CD4-positive, alpha-beta memory T cell (primary cell): ENCODE measurements at regions of chr17 and their contacts with region 1.

Region 1: GRCh38 chr17:58136669-58137283 is 11.4 kb upstream of the OR4D1 start:
- DNase-seq: no peak
- H3K4me3 ChIP-seq: no peak overlapping the region
- H3K4me3 Mint-ChIP-seq: no peak overlapping the region
- H3K27ac ChIP-seq: no peak overlapping the region
- H3K27ac Mint-ChIP-seq: no peak overlapping the region
- H3K4me1 ChIP-seq: no peaks in the 10 kb centered on the region
- H3K4me1 Mint-ChIP-seq: peaks cover 0 to 6% (median 1%) of the 10 kb centered on the region in 4 donors
- H3K27me3 ChIP-seq: no peaks in the 10 kb centered on the region
- H3K27me3 Mint-ChIP-seq: peaks cover 2 to 3% of the 10 kb centered on the region in 2 donors

Region 2: DNA sequence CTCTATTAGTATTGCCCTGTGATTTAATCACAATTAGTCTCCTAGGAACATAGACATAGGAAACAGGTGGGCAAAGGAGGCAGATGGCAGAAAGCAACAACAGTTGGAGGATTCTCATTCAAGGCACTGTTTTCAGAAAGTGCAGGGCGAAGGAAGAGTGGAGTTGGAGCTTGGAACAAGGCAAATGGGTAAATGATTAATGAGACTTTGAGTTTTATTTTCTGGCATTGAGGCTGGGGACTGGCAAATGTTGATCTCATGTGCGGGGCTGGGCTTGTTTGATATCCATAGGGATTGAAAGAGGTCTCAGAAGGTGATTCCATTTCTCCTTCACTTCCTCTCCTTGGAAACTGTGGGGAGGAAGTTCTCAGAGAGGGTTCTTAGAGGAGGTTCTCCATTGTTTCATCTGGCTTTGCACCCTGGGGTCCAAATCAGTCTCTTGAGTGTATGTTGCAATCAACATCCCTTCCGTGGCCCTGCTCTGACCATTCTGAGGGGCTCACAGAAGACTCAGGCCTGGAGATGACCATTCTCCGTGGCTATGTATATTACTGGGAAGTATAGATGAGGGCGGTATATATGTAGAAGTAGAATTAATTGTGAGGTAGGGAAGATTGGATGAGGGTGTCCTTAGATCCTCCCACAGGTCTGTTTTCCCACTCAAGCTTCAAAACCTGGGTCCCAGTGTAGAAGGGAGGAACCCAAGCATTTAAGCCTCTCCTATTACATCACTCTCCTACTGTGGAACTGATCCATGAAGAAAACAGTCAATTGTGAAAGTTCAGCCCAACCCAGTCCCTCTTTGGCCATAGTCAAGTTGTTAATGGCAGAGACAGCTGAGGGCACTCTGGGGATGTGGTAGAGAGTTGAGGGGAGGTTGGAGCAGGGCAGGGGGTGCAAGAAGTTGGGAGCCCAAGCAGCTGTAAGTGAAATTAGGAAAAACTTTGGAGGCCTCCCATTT is 93.3 kb before region 1 on chr17:
- CTCF ChIA-PET with region 1: no interaction called
- POLR2A ChIA-PET with region 1: no interaction called
- intact Hi-C with region 1: no loop called
- DNase-seq: no peak
- H3K4me3 ChIP-seq: no peak overlapping the region
- H3K4me3 Mint-ChIP-seq: no peak overlapping the region
- H3K27ac ChIP-seq: no peak overlapping the region
- H3K27ac Mint-ChIP-seq: peak overlapping the region in 1 of 7 donors; percentile 16
- H3K4me1 ChIP-seq: no peaks in the 10 kb centered on the region
- H3K4me1 Mint-ChIP-seq: no peaks in the 10 kb centered on the region
- H3K27me3 ChIP-seq: no peaks in the 10 kb centered on the region
- H3K27me3 Mint-ChIP-seq: peaks cover 13 to 33% of the 10 kb centered on the region in 2 donors

Region 3: DNA sequence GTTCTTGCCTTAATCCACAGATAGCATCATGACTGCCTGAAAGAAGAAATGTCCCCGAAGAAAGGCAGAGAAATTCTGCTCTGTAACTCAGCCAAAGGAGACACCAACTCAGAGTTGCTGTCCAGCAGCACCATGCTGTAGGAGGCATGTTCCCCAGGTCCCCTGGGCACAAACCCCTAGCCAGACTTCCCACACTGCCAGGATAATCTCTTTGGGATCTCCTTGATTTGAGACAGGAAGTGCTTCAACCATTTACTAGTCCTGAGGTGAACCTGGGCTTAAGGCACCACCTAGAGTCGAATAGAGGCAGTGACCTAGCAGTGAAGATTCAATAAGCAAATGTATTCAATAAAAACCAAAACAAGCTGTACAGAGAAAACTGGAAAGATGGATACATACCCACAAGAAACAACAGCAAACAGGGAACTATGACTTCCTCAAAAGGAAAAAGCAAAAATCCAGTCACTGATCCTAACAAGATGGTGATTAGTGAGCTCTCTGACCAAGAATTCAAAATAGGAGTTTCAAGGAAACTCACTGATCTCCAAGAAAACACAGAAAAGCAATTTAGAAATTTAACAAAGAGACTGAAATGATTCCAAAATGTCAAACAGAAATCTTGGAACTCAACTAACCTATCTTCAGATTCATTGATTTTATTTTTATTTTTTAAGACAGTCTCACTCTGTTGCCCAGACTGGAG is 35.7 kb after region 1 on chr17:
- CTCF ChIA-PET with region 1: interaction called, 10 read pairs
- POLR2A ChIA-PET with region 1: no interaction called
- intact Hi-C with region 1: no loop called
- DNase-seq: peak; percentile 62 to 72 (median 66)
- H3K4me3 ChIP-seq: no peak overlapping the region
- H3K4me3 Mint-ChIP-seq: peak overlapping the region; percentile 16 to 69 (median 51)
- H3K27ac ChIP-seq: no peak overlapping the region
- H3K27ac Mint-ChIP-seq: peak overlapping the region in 6 of 7 donors; percentile 15 to 92 (median 89)
- H3K4me1 ChIP-seq: peaks cover 47% of the 10 kb centered on the region
- H3K4me1 Mint-ChIP-seq: peaks cover 40 to 50% (median 44%) of the 10 kb centered on the region in 4 donors
- H3K27me3 ChIP-seq: no peaks in the 10 kb centered on the region
- H3K27me3 Mint-ChIP-seq: peaks cover under 1% of the 10 kb centered on the region in 2 donors